WTC11 (cell line): ENCODE measurements at regions of chr10 and their contacts with region 1.

Region 1: GRCh38 chr10:79347226-79347893 is at the start of gene PPIF:
- DNase-seq: peak; percentile 96
- ATAC-seq: peak; percentile 88
- H3K4me3 Mint-ChIP-seq: peak within 1 kb of the TSS; percentile 65
- H3K27ac Mint-ChIP-seq: no peak within 1 kb of the TSS
- H3K4me1 Mint-ChIP-seq: peaks cover 8% of the 10 kb centered on the region
- H3K27me3 Mint-ChIP-seq: no peaks in the 10 kb centered on the region
- CTCF ChIP-seq: peak; percentile 95
- total RNA-seq, gene PPIF: 80.9 to 91.4 TPM (median 89.9 TPM) in 3 replicates

Region 2: GRCh38 chr10:79333478-79333877 is 13.9 kb before region 1 on chr10:
- CTCF ChIA-PET with region 1: interaction called, 24 read pairs
- POLR2A ChIA-PET with region 1: no interaction called
- DNase-seq: no peak
- ATAC-seq: no peak
- H3K4me3 Mint-ChIP-seq: no peak overlapping the region
- H3K27ac Mint-ChIP-seq: no peak overlapping the region
- H3K4me1 Mint-ChIP-seq: peaks cover 13% of the 10 kb centered on the region
- H3K27me3 Mint-ChIP-seq: peaks cover 11% of the 10 kb centered on the region
- CTCF ChIP-seq: no peak

Region 3: GRCh38 chr10:79358783-79359182 is 11.4 kb after region 1 on chr10:
- CTCF ChIA-PET with region 1: interaction called, 21 read pairs
- POLR2A ChIA-PET with region 1: interaction called, 3 read pairs
- DNase-seq: no peak
- ATAC-seq: no peak
- H3K4me3 Mint-ChIP-seq: no peak overlapping the region
- H3K27ac Mint-ChIP-seq: no peak overlapping the region
- H3K4me1 Mint-ChIP-seq: no peaks in the 10 kb centered on the region
- H3K27me3 Mint-ChIP-seq: peaks cover 2% of the 10 kb centered on the region
- CTCF ChIP-seq: no peak

Region 4: DNA sequence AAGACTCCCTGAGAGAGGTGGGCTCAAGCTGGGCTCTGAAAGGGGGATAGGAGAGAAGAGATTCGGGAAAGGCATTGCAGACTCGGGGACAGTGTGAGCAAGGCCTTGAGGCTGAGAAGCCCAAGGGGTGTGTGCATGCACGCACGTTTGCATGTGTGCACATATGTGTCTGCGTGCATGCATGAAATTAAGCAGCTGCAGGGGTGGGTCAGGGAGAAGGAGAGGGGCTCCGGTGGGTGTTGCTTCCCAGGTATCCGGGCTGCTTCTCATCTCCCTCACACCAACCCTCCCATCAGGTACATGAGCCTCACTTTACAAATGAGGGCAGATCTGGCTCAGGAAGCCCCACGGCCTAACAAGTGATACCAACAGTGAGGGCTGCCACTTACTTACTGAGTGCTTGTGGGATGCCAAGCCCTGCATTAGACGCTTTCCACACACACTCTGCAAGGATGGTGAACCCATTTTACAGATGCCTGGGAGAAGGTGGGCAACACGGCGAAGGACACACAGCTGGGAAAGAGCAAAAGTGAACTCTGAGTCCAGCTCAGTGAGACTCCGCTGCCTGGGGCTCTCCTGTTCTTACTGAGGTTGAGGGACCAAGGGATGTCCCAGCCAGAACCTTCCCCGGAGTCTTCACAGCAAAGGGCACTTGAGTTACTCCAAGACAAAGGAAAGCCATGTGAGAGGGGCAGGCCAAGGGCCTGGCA is 71.7 kb after region 1 on chr10:
- CTCF ChIA-PET with region 1: no interaction called
- POLR2A ChIA-PET with region 1: no interaction called
- DNase-seq: no peak
- ATAC-seq: no peak
- H3K4me3 Mint-ChIP-seq: no peak overlapping the region
- H3K27ac Mint-ChIP-seq: no peak overlapping the region
- H3K4me1 Mint-ChIP-seq: peaks cover 11% of the 10 kb centered on the region
- H3K27me3 Mint-ChIP-seq: no peaks in the 10 kb centered on the region
- CTCF ChIP-seq: no peak

Region 5: DNA sequence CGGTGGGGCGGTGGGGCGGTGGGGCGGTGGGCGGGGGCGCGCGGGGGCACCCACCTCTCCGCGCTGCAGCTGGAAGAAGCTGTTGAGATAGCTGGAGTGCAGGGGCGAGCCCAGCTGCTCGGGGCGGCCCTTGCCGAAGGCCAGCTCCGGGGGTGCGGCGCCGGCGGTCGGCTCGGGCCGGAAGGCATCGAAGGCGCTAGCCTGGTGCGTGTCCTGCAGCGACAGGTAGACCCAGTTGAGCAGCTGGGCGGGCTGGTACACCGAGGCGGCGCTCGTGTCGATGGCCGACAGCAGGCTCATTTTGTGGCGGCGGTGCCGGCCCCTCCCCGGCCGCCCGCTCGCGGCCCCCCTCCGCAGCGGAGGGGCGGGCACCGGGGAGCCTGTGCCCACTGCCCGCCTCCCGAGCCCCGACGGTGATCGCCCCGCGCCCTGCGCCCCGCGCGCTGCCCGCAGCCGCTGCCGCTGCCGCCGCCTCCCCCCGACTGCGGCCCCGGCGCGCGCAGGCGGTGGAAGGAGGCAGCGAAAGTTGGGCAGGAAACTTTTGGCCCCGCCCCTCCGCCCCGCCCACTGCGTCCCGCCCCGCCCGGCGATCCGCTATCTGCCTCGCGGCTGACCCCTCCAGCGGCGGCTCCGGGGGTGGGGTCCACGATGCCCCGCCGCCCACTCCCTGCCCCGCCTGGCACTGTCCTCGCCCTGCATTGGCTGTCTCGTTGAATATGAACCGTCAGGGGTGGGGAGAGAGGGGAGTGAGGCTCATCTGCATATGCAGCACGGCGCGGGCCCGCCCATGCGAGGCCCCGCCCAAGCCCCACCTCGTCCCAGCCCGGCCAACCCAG is 98.0 kb after region 1 on chr10 and contains the start of gene ZCCHC24:
- CTCF ChIA-PET with region 1: interaction called, 10 read pairs
- POLR2A ChIA-PET with region 1: no interaction called
- DNase-seq: peak; percentile 98
- ATAC-seq: peak; percentile 95
- H3K4me3 Mint-ChIP-seq: peak within 1 kb of the TSS; percentile 86
- H3K27ac Mint-ChIP-seq: peak within 1 kb of the TSS; percentile 98
- H3K4me1 Mint-ChIP-seq: peaks cover 31% of the 10 kb centered on the region
- H3K27me3 Mint-ChIP-seq: peaks cover 44% of the 10 kb centered on the region
- CTCF ChIP-seq: no peak
- total RNA-seq, gene ZCCHC24: 6.0 to 7.7 TPM (median 6.2 TPM) in 3 replicates

Region 6: DNA sequence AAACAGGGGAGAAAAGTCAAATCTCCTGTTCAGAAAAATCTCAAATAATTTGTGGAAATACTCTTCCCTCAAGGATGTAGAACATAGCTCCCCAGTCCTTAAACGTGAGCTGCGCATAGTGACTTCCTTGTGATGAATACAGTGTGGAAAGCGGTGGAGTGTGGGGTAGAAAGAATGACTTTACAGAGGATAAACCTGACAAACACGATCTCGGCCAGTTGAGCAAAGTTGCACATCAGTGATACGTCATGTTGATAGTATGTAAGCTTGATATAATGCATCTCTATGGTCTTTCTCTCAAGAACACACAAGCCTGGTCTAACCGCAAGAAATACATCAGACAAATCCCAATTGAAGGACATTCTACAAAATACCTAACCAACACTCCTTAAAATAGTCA is 130.1 kb after region 1 on chr10:
- CTCF ChIA-PET with region 1: no interaction called
- POLR2A ChIA-PET with region 1: no interaction called
- DNase-seq: no peak
- ATAC-seq: no peak
- H3K4me3 Mint-ChIP-seq: no peak overlapping the region
- H3K27ac Mint-ChIP-seq: no peak overlapping the region
- H3K4me1 Mint-ChIP-seq: no peaks in the 10 kb centered on the region
- H3K27me3 Mint-ChIP-seq: peaks cover 20% of the 10 kb centered on the region
- CTCF ChIP-seq: no peak